T-cell (primary cell): ENCODE measurements at regions of chr19 and their contacts with region 1.

Region 1: DNA sequence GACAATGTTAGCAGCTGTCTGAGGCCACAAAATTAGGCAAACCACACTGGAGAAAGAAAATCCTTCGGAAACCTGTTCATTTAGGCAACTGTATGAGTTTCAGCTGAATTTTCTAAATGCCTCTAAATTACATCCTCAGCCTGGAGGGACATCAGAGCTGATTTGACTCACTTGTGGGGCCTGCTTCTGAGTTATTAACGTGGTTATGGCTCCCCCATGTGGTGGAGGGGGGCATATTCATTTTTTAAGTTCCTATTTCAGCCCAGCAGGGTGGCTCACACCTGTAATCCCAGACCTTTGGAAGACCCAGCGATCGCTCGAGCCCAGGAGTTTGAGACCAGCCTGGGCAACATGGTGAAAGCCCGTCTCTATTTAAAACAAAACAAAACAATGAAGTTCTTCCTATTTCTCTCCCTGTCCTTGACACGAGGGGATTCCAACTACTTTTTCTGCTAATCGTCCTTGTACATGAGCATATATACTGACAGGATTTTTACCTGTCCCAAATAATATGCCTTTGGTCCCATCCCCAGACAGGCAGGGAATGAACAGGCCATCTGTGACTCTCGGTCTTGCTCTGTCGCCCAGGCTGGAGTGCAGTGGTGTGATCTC is 31.5 kb upstream of the HIF3A start:
- DNase-seq: peak; percentile 12 to 87 (median 55)
- ATAC-seq: peak; percentile 60 to 73 (median 64)
- H3K4me3 ChIP-seq: no peak overlapping the region
- H3K4me3 Mint-ChIP-seq: no peak overlapping the region
- H3K27ac ChIP-seq: no peak overlapping the region
- H3K27ac Mint-ChIP-seq: no peak overlapping the region
- H3K4me1 ChIP-seq: peaks cover 0 to 22% of the 10 kb centered on the region in 2 experiments
- H3K4me1 Mint-ChIP-seq: peaks cover 14 to 21% (median 17%) of the 10 kb centered on the region in 3 donors
- H3K27me3 ChIP-seq: peaks cover 2 to 59% of the 10 kb centered on the region in 2 experiments
- H3K27me3 Mint-ChIP-seq: peaks cover 31 to 44% of the 10 kb centered on the region in 2 donors

Region 2: GRCh38 chr19:45670670-45671453 is 594.5 kb before region 1 on chr19:
- CTCF ChIA-PET with region 1: no interaction called
- POLR2A ChIA-PET with region 1: no interaction called
- DNase-seq: peak in 21 of 35 experiments; percentile 7 to 66 (median 36)
- ATAC-seq: peak in 1 of 4 experiments; percentile 32
- H3K4me3 ChIP-seq: no peak overlapping the region
- H3K4me3 Mint-ChIP-seq: peak overlapping the region; percentile 9 to 86 (median 37)
- H3K27ac ChIP-seq: no peak overlapping the region
- H3K27ac Mint-ChIP-seq: peak overlapping the region in 1 of 2 donors; percentile 55
- H3K4me1 ChIP-seq: peaks cover 6 to 39% of the 10 kb centered on the region in 2 experiments
- H3K4me1 Mint-ChIP-seq: peaks cover 33 to 40% (median 34%) of the 10 kb centered on the region in 3 donors
- H3K27me3 ChIP-seq: peaks cover 5 to 36% of the 10 kb centered on the region in 2 experiments
- H3K27me3 Mint-ChIP-seq: peaks cover 13 to 27% of the 10 kb centered on the region in 2 donors

Region 3: GRCh38 chr19:46022431-46023310 is 242.7 kb before region 1 on chr19 and contains the start of gene PGLYRP1:
- CTCF ChIA-PET with region 1: interaction called in 1 of 2 experiments, 23 read pairs
- POLR2A ChIA-PET with region 1: no interaction called
- DNase-seq: no peak
- ATAC-seq: no peak
- H3K4me3 ChIP-seq: no peak within 1 kb of the TSS
- H3K4me3 Mint-ChIP-seq: no peak within 1 kb of the TSS
- H3K27ac ChIP-seq: no peak within 1 kb of the TSS
- H3K27ac Mint-ChIP-seq: no peak within 1 kb of the TSS
- H3K4me1 ChIP-seq: peaks cover 0 to 11% of the 10 kb centered on the region in 2 experiments
- H3K4me1 Mint-ChIP-seq: peaks cover 13 to 21% (median 18%) of the 10 kb centered on the region in 3 donors
- H3K27me3 ChIP-seq: peaks cover 2 to 33% of the 10 kb centered on the region in 2 experiments
- H3K27me3 Mint-ChIP-seq: peaks cover 22 to 28% of the 10 kb centered on the region in 2 donors
- total RNA-seq, gene PGLYRP1: not detected

Region 4: DNA sequence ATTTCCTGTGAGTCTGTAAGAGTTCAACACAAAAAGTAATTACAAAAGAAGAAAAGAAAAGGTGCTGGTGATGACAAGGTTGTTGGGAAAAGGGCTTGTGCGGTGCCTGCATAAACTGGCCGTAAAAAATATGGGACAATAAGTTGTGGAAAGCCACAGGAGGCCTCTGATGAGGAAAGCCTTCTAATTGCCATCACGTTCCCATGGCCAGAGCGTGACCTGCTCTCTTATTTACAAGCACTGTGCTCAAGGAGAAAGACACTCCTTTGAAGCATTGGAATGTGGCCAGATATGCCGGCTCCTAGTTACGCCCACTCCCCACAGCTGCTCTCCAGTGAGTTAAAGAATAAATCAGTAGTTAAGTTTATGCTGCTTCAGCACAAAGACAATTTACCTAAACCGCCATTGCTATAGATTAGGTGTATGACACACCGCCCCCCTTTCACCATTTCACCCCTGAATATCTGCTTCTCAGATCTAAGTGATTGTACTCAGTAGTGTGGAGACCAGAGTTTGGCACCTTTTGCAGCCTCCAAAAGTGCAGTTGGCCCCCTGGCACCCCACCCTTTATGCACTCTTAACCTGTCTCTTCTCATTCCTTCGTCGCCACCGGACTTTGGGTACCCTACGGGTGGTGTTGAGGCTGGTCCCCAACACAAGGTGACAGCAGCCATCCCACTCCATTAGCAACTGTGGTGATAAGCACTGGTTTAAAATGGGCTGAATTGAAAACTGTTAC is 234.3 kb before region 1 on chr19:
- CTCF ChIA-PET with region 1: interaction called, 4 to 23 read pairs
- POLR2A ChIA-PET with region 1: no interaction called
- DNase-seq: no peak
- ATAC-seq: no peak
- H3K4me3 ChIP-seq: no peak overlapping the region
- H3K4me3 Mint-ChIP-seq: no peak overlapping the region
- H3K27ac ChIP-seq: no peak overlapping the region
- H3K27ac Mint-ChIP-seq: no peak overlapping the region
- H3K4me1 ChIP-seq: peaks cover 0 to 8% of the 10 kb centered on the region in 2 experiments
- H3K4me1 Mint-ChIP-seq: peaks cover 10 to 15% (median 14%) of the 10 kb centered on the region in 3 donors
- H3K27me3 ChIP-seq: peaks cover 0 to 40% of the 10 kb centered on the region in 2 experiments
- H3K27me3 Mint-ChIP-seq: peaks cover 25 to 26% of the 10 kb centered on the region in 2 donors